Naive thymus-derived CD4-positive, alpha-beta T cell (primary cell): ENCODE measurements at regions of chr20 and their contacts with region 1.

Region 1: DNA sequence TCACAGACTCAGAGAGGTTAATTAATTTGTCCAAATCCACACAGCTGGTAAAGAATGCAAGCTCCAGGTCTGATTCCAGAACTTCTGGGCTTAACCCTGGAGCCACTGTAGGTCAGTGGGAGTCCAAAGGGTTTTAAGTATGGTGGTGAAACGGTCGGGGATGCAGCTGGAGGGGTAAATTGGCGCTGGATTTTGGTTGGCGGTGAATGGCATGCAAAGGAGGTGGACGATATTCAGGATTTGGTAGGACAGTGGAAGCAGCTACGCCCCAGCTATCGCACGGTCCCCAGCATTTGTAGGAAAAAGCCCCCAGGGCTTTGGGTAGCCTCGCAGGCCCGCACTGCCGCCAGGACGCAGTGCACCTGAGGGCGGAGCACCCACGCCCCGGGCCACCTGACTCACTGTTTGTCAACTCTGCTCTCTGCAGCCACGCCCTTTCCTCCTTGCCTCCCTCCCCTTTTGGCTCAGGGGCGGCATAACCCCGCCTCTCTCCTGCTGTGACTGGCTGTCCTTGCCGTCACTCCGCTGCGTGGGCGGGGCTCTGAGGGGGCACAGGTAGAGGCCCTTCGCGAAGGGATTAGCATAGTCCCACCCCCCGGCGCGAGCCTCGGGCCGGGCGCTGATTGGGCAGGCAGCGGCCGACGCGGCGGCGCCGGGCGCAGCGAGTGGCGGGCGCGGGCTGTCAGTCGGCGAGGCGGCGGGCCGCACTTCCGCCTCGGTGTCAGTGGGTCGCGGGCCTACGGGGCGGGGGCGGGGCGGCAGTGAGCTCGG is at the start of gene OSBPL2:
- DNase-seq: peak; percentile 99 to 100 (median 100)
- ATAC-seq: peak; percentile 99
- H3K4me3 ChIP-seq: peak within 1 kb of the TSS; percentile 48
- H3K4me3 Mint-ChIP-seq: peak within 1 kb of the TSS; percentile 82 to 90 (median 87)
- H3K27ac ChIP-seq: peak within 1 kb of the TSS; percentile 79
- H3K27ac Mint-ChIP-seq: peak within 1 kb of the TSS; percentile 85 to 97 (median 94)
- H3K4me1 ChIP-seq: peaks cover 10 to 22% of the 10 kb centered on the region in 2 donors
- H3K4me1 Mint-ChIP-seq: peaks cover 27 to 47% (median 39%) of the 10 kb centered on the region in 7 donors
- H3K27me3 ChIP-seq: no peaks in the 10 kb centered on the region
- H3K27me3 Mint-ChIP-seq: peaks cover 0 to 5% (median 4%) of the 10 kb centered on the region in 5 donors
- total RNA-seq, gene OSBPL2: 37.6 to 80.8 (median 69.3) TPM

Region 2: GRCh38 chr20:62025832-62026563 is 212.0 kb before region 1 on chr20:
- CTCF ChIA-PET with region 1: no interaction called
- POLR2A ChIA-PET with region 1: no interaction called
- intact Hi-C with region 1: loop called in 1 of 2 experiments (anchors 1 kb)
- DNase-seq: peak in 7 of 9 donors; percentile 39 to 58 (median 50)
- ATAC-seq: peak; percentile 75
- H3K4me3 ChIP-seq: no peak overlapping the region
- H3K4me3 Mint-ChIP-seq: peak overlapping the region in 6 of 10 donors; percentile 5 to 56 (median 26)
- H3K27ac ChIP-seq: no peak overlapping the region
- H3K27ac Mint-ChIP-seq: peak overlapping the region in 8 of 9 donors; percentile 2 to 79 (median 44)
- H3K4me1 ChIP-seq: peaks cover 5 to 21% of the 10 kb centered on the region in 2 donors
- H3K4me1 Mint-ChIP-seq: peaks cover 25 to 73% (median 55%) of the 10 kb centered on the region in 7 donors
- H3K27me3 ChIP-seq: no peaks in the 10 kb centered on the region
- H3K27me3 Mint-ChIP-seq: no peaks in the 10 kb centered on the region

Region 3: DNA sequence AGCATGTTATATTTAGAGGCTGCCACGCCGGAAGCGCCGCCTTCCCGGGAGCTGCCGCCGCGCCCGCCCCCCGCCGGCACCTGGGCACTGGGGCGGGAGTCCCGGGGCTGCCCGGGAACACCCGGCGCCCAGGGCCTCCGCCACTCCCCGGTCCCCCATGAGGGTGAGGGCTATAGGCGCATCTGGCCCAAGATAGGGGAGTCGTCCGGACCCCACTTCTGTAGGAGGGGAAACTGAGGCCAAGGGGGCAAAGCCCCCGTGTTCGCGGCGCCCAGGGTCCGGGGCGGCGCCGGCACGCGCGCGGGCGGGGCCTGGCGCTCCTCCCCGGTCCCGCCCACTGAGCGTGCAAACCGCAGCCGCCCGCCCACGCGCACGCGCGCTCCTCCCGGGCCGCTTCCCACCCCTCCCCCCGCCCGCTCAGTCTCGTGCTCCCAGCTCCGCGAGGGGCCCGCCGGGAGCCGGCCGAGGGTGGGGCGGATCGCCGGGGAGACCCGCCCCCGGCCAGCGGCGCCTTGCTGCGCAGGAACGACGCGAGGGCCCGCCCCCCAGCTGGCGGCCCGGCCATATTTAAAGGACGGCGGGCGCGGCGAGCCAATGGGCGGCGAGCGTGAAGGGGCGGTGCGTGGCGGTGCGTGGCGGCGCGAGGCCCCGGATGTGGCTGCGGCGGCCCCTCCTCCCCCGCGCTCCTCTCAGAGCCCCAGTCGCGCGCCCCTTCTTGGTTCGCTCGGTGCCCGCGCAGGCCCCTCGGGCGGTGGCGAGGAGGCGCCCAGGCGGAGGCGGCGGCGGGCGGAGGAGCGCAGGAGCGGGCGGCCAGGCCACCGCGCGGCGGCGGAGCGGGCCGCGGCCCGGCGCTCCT is 116.0 kb before region 1 on chr20 and contains the start of gene LSM14B:
- CTCF ChIA-PET with region 1: no interaction called
- POLR2A ChIA-PET with region 1: no interaction called
- intact Hi-C with region 1: loop called in 1 of 2 experiments (anchors 1 kb)
- DNase-seq: peak; percentile 94 to 99 (median 96)
- ATAC-seq: peak; percentile 91
- H3K4me3 ChIP-seq: peak within 1 kb of the TSS; percentile 77
- H3K4me3 Mint-ChIP-seq: peak within 1 kb of the TSS; percentile 86 to 96 (median 92)
- H3K27ac ChIP-seq: peak within 1 kb of the TSS; percentile 81
- H3K27ac Mint-ChIP-seq: peak within 1 kb of the TSS; percentile 84 to 97 (median 95)
- H3K4me1 ChIP-seq: peaks cover 33 to 39% of the 10 kb centered on the region in 2 donors
- H3K4me1 Mint-ChIP-seq: peaks cover 42 to 71% (median 59%) of the 10 kb centered on the region in 7 donors
- H3K27me3 ChIP-seq: no peaks in the 10 kb centered on the region
- H3K27me3 Mint-ChIP-seq: no peaks in the 10 kb centered on the region
- total RNA-seq, gene LSM14B: 39.5 to 61.5 (median 41.9) TPM

Region 4: GRCh38 chr20:62182613-62183425 is 55.2 kb before region 1 on chr20 and contains the start of gene MTG2:
- CTCF ChIA-PET with region 1: no interaction called
- POLR2A ChIA-PET with region 1: interaction called, 3 read pairs
- intact Hi-C with region 1: loop called (anchors 1 kb)
- DNase-seq: peak; percentile 81 to 94 (median 93)
- ATAC-seq: peak; percentile 95
- H3K4me3 ChIP-seq: peak within 1 kb of the TSS; percentile 87
- H3K4me3 Mint-ChIP-seq: peak within 1 kb of the TSS; percentile 84 to 95 (median 90)
- H3K27ac ChIP-seq: peak within 1 kb of the TSS; percentile 92
- H3K27ac Mint-ChIP-seq: peak within 1 kb of the TSS; percentile 90 to 97 (median 95)
- H3K4me1 ChIP-seq: peaks cover 9 to 16% of the 10 kb centered on the region in 2 donors
- H3K4me1 Mint-ChIP-seq: peaks cover 15 to 55% (median 42%) of the 10 kb centered on the region in 7 donors
- H3K27me3 ChIP-seq: no peaks in the 10 kb centered on the region
- H3K27me3 Mint-ChIP-seq: no peaks in the 10 kb centered on the region
- total RNA-seq, gene MTG2: 20.4 to 51.5 (median 41.8) TPM

Region 5: DNA sequence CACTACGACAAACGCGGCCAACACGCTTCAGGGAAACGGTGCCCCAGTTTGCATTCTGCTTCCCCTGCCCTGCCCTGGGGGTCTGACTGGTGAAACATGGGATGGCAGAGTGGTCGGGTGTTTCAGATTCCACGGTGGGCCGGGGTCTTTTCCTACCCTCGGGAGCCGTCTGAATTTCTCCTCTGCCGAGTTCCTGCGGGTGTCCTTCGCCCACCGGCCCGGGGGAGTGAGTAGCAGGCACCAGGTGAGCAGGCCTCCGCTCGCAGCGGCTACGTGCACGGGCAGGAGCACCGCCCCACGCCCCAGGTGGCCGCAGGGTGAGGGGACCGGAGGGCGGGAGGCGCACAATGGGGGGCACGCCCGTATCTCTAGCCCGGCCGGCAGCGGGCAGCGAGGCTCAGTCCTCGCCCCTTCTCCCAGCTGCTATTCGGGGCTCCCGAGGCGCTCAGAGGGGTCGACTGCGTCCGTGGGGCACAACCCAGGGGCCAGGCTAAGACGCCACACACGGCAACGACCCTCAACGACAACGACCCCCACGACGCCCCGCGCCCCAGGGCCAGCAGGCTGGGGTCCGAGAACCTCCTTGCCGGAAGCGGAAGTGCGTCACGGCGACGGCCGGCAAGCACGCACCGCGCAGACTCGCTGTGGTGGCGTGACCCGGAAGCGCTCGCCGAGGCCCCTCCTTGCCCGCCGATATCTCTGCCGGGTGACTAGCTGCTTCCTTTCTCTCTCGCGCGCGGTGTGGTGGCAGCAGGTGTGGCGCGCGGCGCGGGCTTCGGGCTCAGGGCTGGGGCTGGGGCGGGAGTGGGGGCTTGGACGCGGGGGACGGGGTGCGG is 148.6 kb after region 1 on chr20 and contains the start of gene RPS21:
- CTCF ChIA-PET with region 1: no interaction called
- POLR2A ChIA-PET with region 1: no interaction called
- intact Hi-C with region 1: loop called (anchors 1 to 5 kb)
- DNase-seq: peak; percentile 89 to 95 (median 92)
- ATAC-seq: peak; percentile 95
- H3K4me3 ChIP-seq: peak within 1 kb of the TSS; percentile 94
- H3K4me3 Mint-ChIP-seq: peak within 1 kb of the TSS; percentile 90 to 96 (median 92)
- H3K27ac ChIP-seq: peak within 1 kb of the TSS; percentile 98
- H3K27ac Mint-ChIP-seq: peak within 1 kb of the TSS; percentile 89 to 96 (median 93)
- H3K4me1 ChIP-seq: peaks cover 24 to 28% of the 10 kb centered on the region in 2 donors
- H3K4me1 Mint-ChIP-seq: peaks cover 40 to 59% (median 50%) of the 10 kb centered on the region in 7 donors
- H3K27me3 ChIP-seq: no peaks in the 10 kb centered on the region
- H3K27me3 Mint-ChIP-seq: no peaks in the 10 kb centered on the region
- total RNA-seq, gene RPS21: 2,026 to 3,407 (median 3,308) TPM

Region 6: DNA sequence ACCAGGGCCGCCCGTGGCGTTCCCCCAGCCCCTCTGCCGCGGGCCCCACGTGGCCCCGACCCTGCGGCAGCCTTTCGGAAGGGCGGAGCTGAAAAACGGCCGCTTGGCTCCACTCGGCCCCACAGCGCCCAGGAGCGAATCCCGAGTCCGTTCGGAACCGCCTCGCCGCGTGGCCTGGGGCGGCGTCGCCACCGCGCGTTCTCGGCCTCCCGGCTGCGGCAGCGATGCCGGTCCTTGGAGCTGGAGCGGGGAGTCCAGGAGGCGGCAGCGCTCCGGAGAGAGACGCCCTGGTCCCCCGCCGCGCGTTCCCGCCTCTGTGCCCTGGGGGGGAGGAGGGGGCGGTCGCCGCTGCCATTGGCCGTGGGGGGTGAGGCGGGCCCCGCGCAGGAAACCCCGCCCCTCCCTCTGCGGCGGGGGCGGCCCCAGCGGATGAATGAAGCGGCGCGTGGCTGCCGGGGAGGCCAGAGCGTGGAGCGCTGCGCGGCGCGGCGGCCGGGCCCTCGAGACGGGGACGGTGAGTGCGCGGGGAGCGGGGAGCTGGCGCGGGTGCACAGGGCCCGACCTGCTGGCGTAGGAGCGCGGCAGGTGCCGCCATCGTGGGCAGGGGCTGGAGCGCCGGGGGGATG is 404.2 kb after region 1 on chr20 and contains the start of gene SLCO4A1:
- CTCF ChIA-PET with region 1: no interaction called
- POLR2A ChIA-PET with region 1: no interaction called
- intact Hi-C with region 1: loop called in 1 of 2 experiments (anchors 5 kb)
- DNase-seq: peak; percentile 76 to 95 (median 83)
- ATAC-seq: peak; percentile 97
- H3K4me3 ChIP-seq: peak within 1 kb of the TSS; percentile 57
- H3K4me3 Mint-ChIP-seq: peak within 1 kb of the TSS; percentile 63 to 88 (median 78)
- H3K27ac ChIP-seq: peak within 1 kb of the TSS; percentile 56
- H3K27ac Mint-ChIP-seq: peak within 1 kb of the TSS in 5 of 9 donors; percentile 10 to 68 (median 53)
- H3K4me1 ChIP-seq: peaks cover 11 to 14% of the 10 kb centered on the region in 2 donors
- H3K4me1 Mint-ChIP-seq: peaks cover 0 to 35% (median 5%) of the 10 kb centered on the region in 7 donors
- H3K27me3 ChIP-seq: no peaks in the 10 kb centered on the region
- H3K27me3 Mint-ChIP-seq: peaks cover 0 to 11% (median 0%) of the 10 kb centered on the region in 5 donors
- total RNA-seq, gene SLCO4A1: 0.81 to 45.5 (median 1.4) TPM

Region 7: GRCh38 chr20:62662422-62662821 is 424.4 kb after region 1 on chr20:
- CTCF ChIA-PET with region 1: no interaction called
- POLR2A ChIA-PET with region 1: no interaction called
- intact Hi-C with region 1: no loop called
- DNase-seq: no peak
- ATAC-seq: peak; percentile 38
- H3K4me3 ChIP-seq: no peak overlapping the region
- H3K4me3 Mint-ChIP-seq: no peak overlapping the region
- H3K27ac ChIP-seq: no peak overlapping the region
- H3K27ac Mint-ChIP-seq: no peak overlapping the region
- H3K4me1 ChIP-seq: no peaks in the 10 kb centered on the region
- H3K4me1 Mint-ChIP-seq: peaks cover 0 to 5% (median 0%) of the 10 kb centered on the region in 7 donors
- H3K27me3 ChIP-seq: no peaks in the 10 kb centered on the region
- H3K27me3 Mint-ChIP-seq: no peaks in the 10 kb centered on the region